Ascending aorta (tissue), 2 donors: ENCODE measurements at regions of chr10 and their contacts with region 1.

Region 1: GRCh38 chr10:102450194-102450938 is 977 bp downstream of the C10orf95 start:
- DNase-seq: peak in 1 of 2 donors; percentile 89
- H3K4me3 ChIP-seq: peak overlapping the region; percentile 89 to 94
- H3K27ac ChIP-seq: peak overlapping the region; percentile 77 to 87
- H3K4me1 ChIP-seq: peaks cover 5 to 12% of the 10 kb centered on the region in 2 donors
- H3K27me3 ChIP-seq: no peaks in the 10 kb centered on the region
- CTCF ChIP-seq: peak in 1 of 3 experiments; percentile 13

Region 2: DNA sequence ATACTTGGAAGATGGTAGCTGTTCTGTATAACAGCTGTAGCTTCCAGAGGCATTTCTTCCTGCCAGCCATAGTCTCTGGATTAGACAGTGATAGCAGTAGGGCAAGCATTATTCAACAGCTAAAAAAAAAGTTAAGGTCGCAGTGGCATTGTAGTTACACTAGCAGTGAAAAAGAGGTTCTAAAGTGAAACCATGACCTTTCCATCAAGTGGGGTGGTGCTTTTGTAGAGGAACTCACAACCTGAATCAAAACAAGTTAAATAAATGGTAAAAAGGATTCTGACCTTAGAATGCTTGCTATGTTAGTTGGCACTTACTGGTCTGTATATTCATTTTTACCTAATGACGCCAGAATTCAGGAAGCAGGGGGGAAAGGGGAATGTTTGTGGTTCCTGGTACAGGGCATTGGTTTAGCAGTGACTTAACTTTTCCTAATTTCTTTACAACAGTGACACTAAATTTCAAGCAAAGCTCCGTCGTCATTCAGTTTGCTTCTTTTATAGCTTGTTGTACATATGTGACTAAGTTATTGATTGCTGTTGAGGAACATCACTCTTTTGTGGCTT is 150.0 kb before region 1 on chr10:
- intact Hi-C with region 1: no loop called
- DNase-seq: no peak
- H3K4me3 ChIP-seq: no peak overlapping the region
- H3K27ac ChIP-seq: peak overlapping the region in 1 of 2 donors; percentile 10
- H3K4me1 ChIP-seq: peaks cover 0 to 7% of the 10 kb centered on the region in 2 donors
- H3K27me3 ChIP-seq: no peaks in the 10 kb centered on the region
- CTCF ChIP-seq: no peak

Region 3: DNA sequence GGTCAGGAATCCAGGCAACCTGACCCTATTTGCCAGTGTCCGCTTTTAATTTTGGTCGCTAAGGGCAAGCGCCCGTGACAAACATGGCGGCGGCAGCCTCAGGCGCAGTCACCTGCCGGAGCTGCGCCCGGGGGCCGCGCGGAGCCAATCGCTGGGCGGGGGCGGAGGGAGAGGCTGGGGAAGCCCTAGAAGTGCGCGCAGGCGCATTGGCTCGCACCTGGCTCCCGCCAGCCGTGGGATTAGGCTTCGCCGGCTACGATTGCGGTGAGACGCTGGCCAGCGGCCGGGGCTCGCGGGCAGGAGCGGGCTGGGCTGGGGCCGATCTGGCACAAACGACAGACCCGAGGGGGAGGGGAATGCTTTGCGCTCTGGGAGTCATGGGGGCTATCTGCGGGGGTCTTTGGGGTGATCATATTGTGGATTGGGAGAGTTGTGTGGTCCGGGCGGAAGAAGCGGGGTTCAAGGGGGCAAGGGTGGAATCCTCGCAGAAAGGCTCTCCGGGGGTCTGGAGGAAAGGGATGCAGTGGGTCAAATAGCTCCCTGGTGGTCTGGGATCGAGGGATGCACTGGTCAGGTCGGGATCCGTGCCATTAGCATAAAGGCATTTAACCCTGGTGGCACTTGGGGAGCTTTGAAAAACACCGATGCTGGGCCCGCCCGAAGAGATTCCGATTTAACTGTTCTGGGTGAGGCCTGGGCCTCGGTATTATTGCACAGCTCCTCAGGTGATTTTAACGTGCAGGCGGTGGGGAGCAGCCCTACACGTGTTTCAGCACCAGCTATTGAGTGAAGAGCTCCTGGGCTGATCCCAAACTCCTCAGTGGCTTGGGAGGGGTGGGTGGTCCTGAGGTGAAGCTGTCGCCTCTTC is 11.1 kb after region 1 on chr10:
- intact Hi-C with region 1: loop called (anchors 1 kb)
- DNase-seq: peak; percentile 68 to 93
- H3K4me3 ChIP-seq: peak overlapping the region; percentile 62 to 71
- H3K27ac ChIP-seq: no peak overlapping the region
- H3K4me1 ChIP-seq: peaks cover 0 to 7% of the 10 kb centered on the region in 2 donors
- H3K27me3 ChIP-seq: no peaks in the 10 kb centered on the region
- CTCF ChIP-seq: no peak